ENCODE measurements at regions of chr12 and their contacts with region 1.

Region 1: GRCh38 chr12:39272871-39273770 is 169.8 kb downstream of the KIF21A start:
- DNase-seq: no peak
- H3K4me3 ChIP-seq: no peak overlapping the region
- H3K27ac ChIP-seq: no peak overlapping the region
- H3K4me1 ChIP-seq: no peaks in the 10 kb centered on the region
- H3K27me3 ChIP-seq: no peaks in the 10 kb centered on the region
- CTCF ChIP-seq: peak; percentile 26 to 67 (median 66)
- EP300 ChIP-seq: no peak
- POLR2A ChIP-seq: no peak

Region 2: GRCh38 chr12:38138225-38139221 is 1134.6 kb before region 1 on chr12:
- intact Hi-C with region 1: loop called (anchors 10 kb)
- DNase-seq: no peak
- H3K4me3 ChIP-seq: peak overlapping the region; percentile 38 to 48 (median 44)
- H3K27ac ChIP-seq: no peak overlapping the region
- H3K4me1 ChIP-seq: peaks cover 0 to 12% (median 9%) of the 10 kb centered on the region in 4 donors
- H3K27me3 ChIP-seq: peaks cover 0 to 18% (median 5%) of the 10 kb centered on the region in 4 donors
- CTCF ChIP-seq: peak; percentile 90 to 98 (median 98)
- EP300 ChIP-seq: no peak
- POLR2A ChIP-seq: no peak

Region 3: DNA sequence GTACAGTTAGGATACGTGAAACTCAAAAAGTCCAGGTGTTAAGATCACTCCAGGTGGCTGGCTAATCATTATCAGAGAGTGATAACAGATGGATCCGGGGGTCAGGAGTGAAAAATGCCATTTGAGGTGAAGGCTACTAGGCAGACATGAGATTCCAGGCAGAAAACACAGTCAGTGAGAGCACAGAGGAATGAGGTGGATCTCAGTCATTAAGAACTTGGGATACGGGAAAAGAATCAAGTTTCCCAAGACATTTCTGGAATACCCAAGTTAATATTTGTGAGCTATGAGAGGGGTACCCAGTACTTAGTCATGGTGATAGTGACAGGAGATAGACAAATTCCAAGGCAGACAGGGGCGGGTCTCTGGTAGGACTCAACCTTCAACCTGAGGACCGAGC is 1051.1 kb before region 1 on chr12:
- intact Hi-C with region 1: no loop called
- DNase-seq: no peak
- H3K4me3 ChIP-seq: no peak overlapping the region
- H3K27ac ChIP-seq: no peak overlapping the region
- H3K4me1 ChIP-seq: no peaks in the 10 kb centered on the region
- H3K27me3 ChIP-seq: no peaks in the 10 kb centered on the region
- CTCF ChIP-seq: no peak
- EP300 ChIP-seq: no peak
- POLR2A ChIP-seq: no peak

Region 4: GRCh38 chr12:39145175-39145999 is 127.7 kb before region 1 on chr12:
- intact Hi-C with region 1: loop called (anchors 2 kb)
- DNase-seq: no peak
- H3K4me3 ChIP-seq: peak overlapping the region; percentile 61 to 73 (median 68)
- H3K27ac ChIP-seq: peak overlapping the region in 1 of 4 donors; percentile 40
- H3K4me1 ChIP-seq: peaks cover 6 to 22% (median 12%) of the 10 kb centered on the region in 4 donors
- H3K27me3 ChIP-seq: peaks cover 0 to 26% (median 0%) of the 10 kb centered on the region in 4 donors
- CTCF ChIP-seq: peak; percentile 63 to 87 (median 72)
- EP300 ChIP-seq: no peak
- POLR2A ChIP-seq: no peak

Measured in esophagus muscularis mucosa (tissue), 4 donors.